Activated naive CD4-positive, alpha-beta T cell treated with anti-CD3 and anti-CD28 coated beads, Interleukin-2, amount 10 ng/mL, durations not matched to agents 7 days and 5 days (primary cell): ENCODE measurements at regions of chr13 and their contacts with region 1.

Region 1: DNA sequence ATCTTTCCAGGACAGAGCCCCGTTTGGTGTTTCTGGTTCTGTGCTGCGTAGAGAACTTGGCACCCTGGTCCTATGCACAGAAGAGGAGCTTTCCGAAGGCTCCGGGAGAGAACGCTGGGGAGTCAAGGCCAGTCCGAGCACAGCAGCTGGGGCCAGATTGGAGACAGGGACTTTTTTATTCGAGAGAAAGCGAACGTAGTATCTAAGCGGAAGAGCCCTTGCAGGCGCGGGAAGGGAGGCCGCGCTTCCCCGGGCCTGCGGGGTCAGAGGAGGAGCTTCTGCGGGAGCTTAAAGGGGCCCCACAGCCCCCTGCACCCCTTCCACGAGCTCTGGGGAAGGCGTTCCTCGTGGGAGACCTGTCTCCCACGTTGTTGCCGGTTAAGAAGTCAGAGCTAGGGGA is 48.6 kb upstream of the ARHGEF7 start:
- DNase-seq: no peak
- H3K4me3 Mint-ChIP-seq: peak overlapping the region; percentile 56
- H3K27ac Mint-ChIP-seq: no peak overlapping the region
- H3K4me1 Mint-ChIP-seq: peaks cover 10% of the 10 kb centered on the region
- H3K27me3 Mint-ChIP-seq: peaks cover 58% of the 10 kb centered on the region

Region 2: GRCh38 chr13:110915057-110915873 is 151.3 kb before region 1 on chr13 and contains the start of gene ANKRD10:
- CTCF ChIA-PET with region 1: interaction called, 10 read pairs
- DNase-seq: peak; percentile 97
- H3K4me3 Mint-ChIP-seq: peak within 1 kb of the TSS; percentile 92
- H3K27ac Mint-ChIP-seq: peak within 1 kb of the TSS; percentile 97
- H3K4me1 Mint-ChIP-seq: peaks cover 42% of the 10 kb centered on the region
- H3K27me3 Mint-ChIP-seq: no peaks in the 10 kb centered on the region

Region 3: GRCh38 chr13:110944121-110944967 is 122.2 kb before region 1 on chr13:
- CTCF ChIA-PET with region 1: interaction called, 10 read pairs
- DNase-seq: peak; percentile 49
- H3K4me3 Mint-ChIP-seq: no peak overlapping the region
- H3K27ac Mint-ChIP-seq: no peak overlapping the region
- H3K4me1 Mint-ChIP-seq: no peaks in the 10 kb centered on the region
- H3K27me3 Mint-ChIP-seq: no peaks in the 10 kb centered on the region

Region 4: DNA sequence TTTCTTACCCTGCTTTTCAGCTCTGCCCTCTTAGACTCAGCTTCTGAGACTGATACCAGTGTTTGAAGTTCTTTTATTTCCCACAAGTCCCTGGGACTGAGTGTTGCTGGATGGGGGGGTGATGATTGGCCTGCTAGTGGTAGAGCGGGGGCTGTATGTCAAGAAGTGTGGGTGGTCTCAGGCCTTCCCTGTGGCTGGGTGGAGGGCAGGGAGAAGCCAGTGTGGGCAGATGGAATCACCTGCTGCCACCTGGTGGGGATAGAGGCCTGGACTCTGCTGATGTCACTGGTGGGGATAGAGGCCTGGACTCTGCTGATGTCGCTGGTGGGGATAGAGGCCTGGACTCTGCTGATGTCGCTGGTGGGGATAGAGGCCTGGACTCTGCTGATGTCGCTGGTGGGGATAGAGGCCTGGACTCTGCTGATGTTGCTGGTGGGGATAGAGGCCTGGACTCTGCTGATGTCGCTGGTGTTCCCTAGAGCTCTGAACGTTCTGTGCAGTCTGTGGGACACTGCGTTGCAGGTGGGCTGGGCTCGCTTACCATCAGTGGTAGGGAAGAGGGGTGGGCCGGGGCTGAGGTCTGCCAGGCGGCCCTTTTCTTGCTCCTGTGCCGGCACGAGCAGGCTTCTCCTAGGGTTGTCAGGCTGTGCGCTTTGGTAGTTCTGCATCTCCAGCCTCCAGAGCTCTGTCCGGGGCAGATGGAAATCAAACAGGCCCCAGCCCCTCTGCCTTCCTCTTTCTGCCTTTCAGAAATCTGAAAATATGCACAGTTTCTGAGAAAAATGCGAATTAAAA is 149.8 kb after region 1 on chr13:
- CTCF ChIA-PET with region 1: interaction called, 38 read pairs
- DNase-seq: peak; percentile 65
- H3K4me3 Mint-ChIP-seq: no peak overlapping the region
- H3K27ac Mint-ChIP-seq: no peak overlapping the region
- H3K4me1 Mint-ChIP-seq: peaks cover 3% of the 10 kb centered on the region
- H3K27me3 Mint-ChIP-seq: no peaks in the 10 kb centered on the region

Region 5: DNA sequence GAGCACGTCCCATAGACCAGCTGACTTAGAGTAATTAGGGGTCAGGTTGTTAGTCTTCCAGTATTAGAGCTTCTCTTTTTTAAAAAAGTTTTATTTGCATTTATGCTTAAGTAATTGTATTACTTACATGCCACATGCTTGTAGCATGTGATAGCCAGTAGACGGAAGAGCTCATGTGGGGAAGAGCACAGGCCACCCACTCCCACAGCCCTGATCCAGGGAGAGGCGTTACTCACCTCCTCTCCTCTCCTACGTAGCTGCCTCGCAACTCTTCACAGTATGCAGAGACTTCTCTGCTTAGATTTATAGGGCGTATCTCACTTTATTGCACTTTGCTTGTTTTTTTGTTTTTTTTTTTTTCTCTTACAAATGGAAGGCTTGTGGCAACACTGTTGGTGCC is 158.6 kb after region 1 on chr13:
- CTCF ChIA-PET with region 1: interaction called, 25 read pairs
- DNase-seq: no peak
- H3K4me3 Mint-ChIP-seq: no peak overlapping the region
- H3K27ac Mint-ChIP-seq: no peak overlapping the region
- H3K4me1 Mint-ChIP-seq: peaks cover 17% of the 10 kb centered on the region
- H3K27me3 Mint-ChIP-seq: no peaks in the 10 kb centered on the region

Region 6: GRCh38 chr13:111403266-111403665 is 336.7 kb after region 1 on chr13:
- CTCF ChIA-PET with region 1: interaction called, 14 read pairs
- DNase-seq: peak; percentile 18
- H3K4me3 Mint-ChIP-seq: no peak overlapping the region
- H3K27ac Mint-ChIP-seq: no peak overlapping the region
- H3K4me1 Mint-ChIP-seq: no peaks in the 10 kb centered on the region
- H3K27me3 Mint-ChIP-seq: peaks cover 9% of the 10 kb centered on the region

Region 7: DNA sequence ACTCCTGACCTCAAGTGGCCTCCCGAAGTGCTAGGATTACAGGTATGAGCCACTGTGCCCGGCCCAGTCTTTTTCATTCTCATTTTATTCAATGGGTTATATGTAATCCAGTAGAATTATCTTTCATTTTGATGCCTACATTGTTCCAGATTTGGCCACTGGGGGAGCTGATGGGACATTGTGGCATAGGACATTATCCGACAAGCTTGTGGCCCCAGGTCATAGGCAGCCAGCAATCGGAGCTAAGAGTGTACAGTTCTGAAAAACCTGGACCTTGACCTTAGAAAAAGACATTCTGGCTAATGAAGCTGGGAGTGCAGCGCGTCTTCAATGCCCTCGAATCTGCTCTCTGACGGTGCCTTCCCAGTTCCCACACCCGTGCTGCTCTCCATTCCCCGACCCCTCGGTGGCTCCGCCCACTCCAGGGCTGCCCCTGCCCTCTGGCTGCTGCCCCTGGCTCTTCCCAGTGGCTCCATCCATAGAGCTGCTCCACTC is 362.6 kb after region 1 on chr13:
- CTCF ChIA-PET with region 1: interaction called, 16 read pairs
- DNase-seq: peak; percentile 64
- H3K4me3 Mint-ChIP-seq: no peak overlapping the region
- H3K27ac Mint-ChIP-seq: no peak overlapping the region
- H3K4me1 Mint-ChIP-seq: no peaks in the 10 kb centered on the region
- H3K27me3 Mint-ChIP-seq: peaks cover 12% of the 10 kb centered on the region